ENCODE measurements at regions of chr4 and their contacts with region 1.

Region 1: GRCh38 chr4:171639540-171639939 is 173.7 kb upstream of the GALNTL6 start:
- DNase-seq: peak; percentile 88
- ATAC-seq: peak; percentile 90
- H3K4me3 ChIP-seq: no peak overlapping the region
- H3K27ac ChIP-seq: peak overlapping the region; percentile 73
- H3K4me1 ChIP-seq: peaks cover 32% of the 10 kb centered on the region
- H3K27me3 ChIP-seq: no peaks in the 10 kb centered on the region
- CTCF ChIP-seq: no peak
- EP300 ChIP-seq: peak in 1 of 2 experiments; percentile 79
- POLR2A ChIP-seq: no peak
- RAD21 ChIP-seq: peak; percentile 19; the same call in 1 of the 2 replicates

Region 2: GRCh38 chr4:171473155-171473554 is 166.4 kb before region 1 on chr4:
- CTCF ChIA-PET with region 1: no interaction called
- POLR2A ChIA-PET with region 1: no interaction called
- RAD21 ChIA-PET with region 1: no interaction called
- SMC1A ChIA-PET with region 1: no interaction called
- in situ Hi-C with region 1: no loop called
- intact Hi-C with region 1: loop called (anchors 5 kb)
- DNase-seq: no peak
- ATAC-seq: peak; percentile 72
- H3K4me3 ChIP-seq: no peak overlapping the region
- H3K27ac ChIP-seq: no peak overlapping the region
- H3K4me1 ChIP-seq: no peaks in the 10 kb centered on the region
- H3K27me3 ChIP-seq: no peaks in the 10 kb centered on the region
- CTCF ChIP-seq: no peak
- EP300 ChIP-seq: no peak
- POLR2A ChIP-seq: no peak
- RAD21 ChIP-seq: no peak

Region 3: GRCh38 chr4:171519457-171519856 is 120.1 kb before region 1 on chr4:
- CTCF ChIA-PET with region 1: no interaction called
- POLR2A ChIA-PET with region 1: no interaction called
- RAD21 ChIA-PET with region 1: no interaction called
- SMC1A ChIA-PET with region 1: no interaction called
- in situ Hi-C with region 1: no loop called
- intact Hi-C with region 1: loop called (anchors 5 kb)
- DNase-seq: no peak
- ATAC-seq: peak; percentile 23
- H3K4me3 ChIP-seq: no peak overlapping the region
- H3K27ac ChIP-seq: no peak overlapping the region
- H3K4me1 ChIP-seq: no peaks in the 10 kb centered on the region
- H3K27me3 ChIP-seq: no peaks in the 10 kb centered on the region
- CTCF ChIP-seq: no peak
- EP300 ChIP-seq: no peak
- POLR2A ChIP-seq: no peak
- RAD21 ChIP-seq: no peak

Region 4: GRCh38 chr4:171602638-171603355 is 36.7 kb before region 1 on chr4:
- CTCF ChIA-PET with region 1: no interaction called
- POLR2A ChIA-PET with region 1: no interaction called
- RAD21 ChIA-PET with region 1: no interaction called
- SMC1A ChIA-PET with region 1: no interaction called
- in situ Hi-C with region 1: no loop called
- intact Hi-C with region 1: no loop called
- DNase-seq: no peak
- ATAC-seq: no peak
- H3K4me3 ChIP-seq: no peak overlapping the region
- H3K27ac ChIP-seq: no peak overlapping the region
- H3K4me1 ChIP-seq: no peaks in the 10 kb centered on the region
- H3K27me3 ChIP-seq: no peaks in the 10 kb centered on the region
- CTCF ChIP-seq: no peak
- EP300 ChIP-seq: no peak
- POLR2A ChIP-seq: no peak
- RAD21 ChIP-seq: no peak

Region 5: DNA sequence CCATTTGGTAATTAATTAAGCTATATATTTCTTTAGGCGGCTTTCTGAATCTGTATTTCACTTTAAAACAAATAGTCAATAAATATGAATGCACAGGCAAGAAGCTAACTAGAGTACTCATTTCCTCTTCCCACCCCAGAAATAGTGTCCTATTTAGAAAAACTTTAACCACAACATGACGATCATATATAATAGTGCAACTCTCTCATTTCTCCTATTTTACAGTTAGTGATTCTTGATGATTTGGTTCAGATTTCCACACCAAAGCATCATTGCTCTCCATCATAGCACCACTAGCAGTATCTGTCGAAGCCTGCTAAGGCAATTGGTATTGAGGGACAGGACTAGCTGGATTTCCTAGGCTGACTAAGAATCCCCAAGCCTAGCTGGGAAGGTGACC is 10.4 kb before region 1 on chr4:
- CTCF ChIA-PET with region 1: interaction called, 6 read pairs
- POLR2A ChIA-PET with region 1: interaction called, 3 read pairs
- RAD21 ChIA-PET with region 1: interaction called, 9 read pairs
- SMC1A ChIA-PET with region 1: interaction called, 30 read pairs
- in situ Hi-C with region 1: no loop called
- intact Hi-C with region 1: no loop called
- DNase-seq: no peak
- ATAC-seq: peak; percentile 95
- H3K4me3 ChIP-seq: no peak overlapping the region
- H3K27ac ChIP-seq: peak overlapping the region; percentile 31
- H3K4me1 ChIP-seq: peaks cover 7% of the 10 kb centered on the region
- H3K27me3 ChIP-seq: no peaks in the 10 kb centered on the region
- CTCF ChIP-seq: no peak
- EP300 ChIP-seq: peak; percentile 65 to 83; a peak in 3 of 4 replicates
- POLR2A ChIP-seq: no peak
- RAD21 ChIP-seq: no peak